ENCODE measurements at regions of chr17 and their contacts with region 1.

Region 1: DNA sequence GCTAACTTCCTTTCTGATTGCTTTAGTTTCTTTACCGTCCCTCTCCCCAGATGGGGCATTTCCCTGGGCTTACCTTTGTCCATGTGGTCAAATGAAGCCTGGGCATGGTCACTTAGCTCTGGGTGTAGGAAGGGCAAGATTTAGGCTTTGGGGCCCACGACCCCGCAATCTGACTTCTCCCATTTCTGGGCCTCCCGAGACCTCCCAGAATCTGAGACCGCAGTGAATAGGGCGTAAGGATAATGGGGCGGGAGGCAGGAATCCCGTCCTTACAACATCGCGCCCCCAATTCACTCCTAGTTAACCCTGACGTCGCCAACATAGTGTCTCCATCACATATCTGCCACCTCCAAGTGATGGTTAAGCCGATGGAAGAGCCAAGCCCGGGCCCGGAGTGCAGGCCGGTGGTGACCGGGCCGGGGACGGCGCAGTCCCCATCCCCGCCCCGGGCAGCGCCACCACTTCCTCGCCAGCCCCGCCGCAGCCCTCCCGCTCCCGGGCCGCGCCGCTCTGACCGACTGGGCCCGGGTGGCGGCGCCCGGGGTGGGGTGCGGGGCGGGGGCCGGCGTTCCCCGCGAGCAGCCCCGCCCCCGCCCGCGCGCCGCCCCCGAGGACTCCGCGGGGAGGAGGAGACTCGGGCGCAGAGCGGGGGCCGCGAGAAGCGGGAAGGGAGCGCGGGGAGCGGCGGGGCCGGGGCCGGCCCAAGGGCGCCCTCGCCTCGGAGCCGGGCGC is at the start of gene RHBDL3:
- DNase-seq: no peak
- H3K4me3 Mint-ChIP-seq: peak within 1 kb of the TSS; percentile 81
- H3K27ac Mint-ChIP-seq: no peak within 1 kb of the TSS
- H3K4me1 Mint-ChIP-seq: peaks cover 20% of the 10 kb centered on the region
- H3K27me3 Mint-ChIP-seq: peaks cover 75% of the 10 kb centered on the region
- total RNA-seq, gene RHBDL3: 0.10 and 0.26 TPM in 2 replicates

Region 2: GRCh38 chr17:32206861-32207260 is 58.5 kb before region 1 on chr17:
- intact Hi-C with region 1: loop called (anchors 10 kb)
- DNase-seq: no peak
- H3K4me3 Mint-ChIP-seq: no peak overlapping the region
- H3K27ac Mint-ChIP-seq: no peak overlapping the region
- H3K4me1 Mint-ChIP-seq: no peaks in the 10 kb centered on the region
- H3K27me3 Mint-ChIP-seq: no peaks in the 10 kb centered on the region

Region 3: GRCh38 chr17:32222620-32223019 is 42.7 kb before region 1 on chr17:
- intact Hi-C with region 1: loop called (anchors 1 kb)
- DNase-seq: no peak
- H3K4me3 Mint-ChIP-seq: no peak overlapping the region
- H3K27ac Mint-ChIP-seq: no peak overlapping the region
- H3K4me1 Mint-ChIP-seq: peaks cover 19% of the 10 kb centered on the region
- H3K27me3 Mint-ChIP-seq: no peaks in the 10 kb centered on the region

Region 4: DNA sequence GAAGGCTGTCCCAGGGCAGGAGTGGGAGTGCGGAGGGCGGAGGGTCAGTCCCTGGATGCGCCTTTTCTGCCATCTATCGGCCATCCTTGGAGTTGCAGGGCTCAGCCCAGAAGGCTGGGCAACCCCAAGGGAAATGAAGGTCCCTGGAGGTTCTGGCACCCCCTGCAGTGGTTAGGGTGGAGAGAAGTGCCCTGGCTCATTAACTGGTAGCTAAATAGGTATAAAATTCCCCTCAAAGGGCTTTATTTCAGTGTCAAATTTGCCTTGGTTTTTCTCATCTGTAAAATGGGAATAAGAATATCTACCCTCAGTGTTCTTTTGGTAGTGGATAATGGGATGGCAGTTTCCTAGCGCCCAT is 54.2 kb after region 1 on chr17:
- intact Hi-C with region 1: loop called (anchors 5 kb)
- DNase-seq: peak; percentile 69
- H3K4me3 Mint-ChIP-seq: peak overlapping the region; percentile 83
- H3K27ac Mint-ChIP-seq: peak overlapping the region; percentile 18
- H3K4me1 Mint-ChIP-seq: peaks cover 24% of the 10 kb centered on the region
- H3K27me3 Mint-ChIP-seq: peaks cover 13% of the 10 kb centered on the region

Region 5: GRCh38 chr17:32558997-32559650 is 293.8 kb after region 1 on chr17:
- intact Hi-C with region 1: no loop called
- DNase-seq: no peak
- H3K4me3 Mint-ChIP-seq: no peak overlapping the region
- H3K27ac Mint-ChIP-seq: no peak overlapping the region
- H3K4me1 Mint-ChIP-seq: peaks cover 45% of the 10 kb centered on the region
- H3K27me3 Mint-ChIP-seq: peaks cover 3% of the 10 kb centered on the region